A673 (cell line): ENCODE measurements at regions of chr2 and their contacts with region 1.

Region 1: DNA sequence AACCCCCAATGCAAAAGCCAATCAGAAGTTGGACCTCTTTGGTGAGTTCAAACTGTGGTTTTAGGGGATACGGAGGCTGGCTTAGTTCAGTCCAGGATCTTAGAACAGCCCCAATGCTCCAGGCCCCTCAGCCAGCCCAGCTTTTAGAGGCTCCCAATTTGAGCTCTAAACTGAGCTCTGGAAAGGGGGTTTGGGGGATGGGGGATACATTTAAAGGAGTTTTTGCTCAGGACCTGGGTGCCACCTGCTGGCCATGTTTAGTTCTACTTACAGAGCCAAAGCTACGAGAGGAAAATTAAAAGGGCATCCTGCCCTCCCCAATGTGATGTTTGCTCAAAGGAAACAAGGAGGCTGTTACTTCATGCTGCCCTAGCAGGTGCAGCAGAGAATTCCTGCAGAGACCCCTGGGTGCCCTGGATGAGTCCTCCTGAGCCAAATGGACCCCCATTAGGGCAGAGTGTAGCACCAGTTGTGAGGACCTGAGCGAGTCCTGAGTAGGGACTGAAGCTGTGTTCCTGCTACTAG is 15.9 kb upstream of the TMEM214 start:
- DNase-seq: peak; percentile 92
- H3K4me3 ChIP-seq: no peak overlapping the region
- H3K27ac ChIP-seq: peak overlapping the region; percentile 74
- H3K4me1 ChIP-seq: peaks cover 21% of the 10 kb centered on the region
- H3K27me3 ChIP-seq: no peaks in the 10 kb centered on the region
- CTCF ChIP-seq: peak; percentile 82

Region 2: GRCh38 chr2:26605195-26605998 is 411.5 kb before region 1 on chr2:
- CTCF ChIA-PET with region 1: no interaction called
- POLR2A ChIA-PET with region 1: no interaction called
- intact Hi-C with region 1: loop called (anchors 5 kb)
- DNase-seq: peak; percentile 62
- H3K4me3 ChIP-seq: no peak overlapping the region
- H3K27ac ChIP-seq: no peak overlapping the region
- H3K4me1 ChIP-seq: no peaks in the 10 kb centered on the region
- H3K27me3 ChIP-seq: no peaks in the 10 kb centered on the region
- CTCF ChIP-seq: peak; percentile 92

Region 3: GRCh38 chr2:26911911-26912861 is 104.7 kb before region 1 on chr2:
- CTCF ChIA-PET with region 1: interaction called, 17 read pairs
- POLR2A ChIA-PET with region 1: no interaction called
- intact Hi-C with region 1: no loop called
- DNase-seq: peak; percentile 95
- H3K4me3 ChIP-seq: no peak overlapping the region
- H3K27ac ChIP-seq: peak overlapping the region; percentile 66
- H3K4me1 ChIP-seq: peaks cover 38% of the 10 kb centered on the region
- H3K27me3 ChIP-seq: no peaks in the 10 kb centered on the region
- CTCF ChIP-seq: no peak

Region 4: DNA sequence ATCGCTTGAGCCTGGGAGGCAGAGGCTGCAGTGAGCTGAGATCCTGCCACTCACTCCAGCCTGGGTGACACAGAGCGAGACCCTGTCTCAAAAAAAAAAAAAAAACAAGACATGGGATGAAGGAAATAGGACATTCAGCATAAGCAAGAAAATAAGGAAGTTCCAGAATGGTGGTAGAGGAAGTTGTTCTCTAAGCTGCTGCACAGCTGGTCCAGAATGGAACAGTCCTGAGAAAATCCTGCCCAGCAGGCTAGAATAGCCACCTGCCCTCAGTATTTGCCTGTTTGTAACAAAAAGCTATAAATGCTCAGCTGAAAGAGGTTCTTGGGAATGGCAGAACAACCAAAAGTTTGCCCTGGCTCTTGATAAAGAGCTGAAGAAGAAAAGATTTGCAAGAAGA is 57.5 kb before region 1 on chr2:
- CTCF ChIA-PET with region 1: interaction called, 71 read pairs
- POLR2A ChIA-PET with region 1: interaction called, 6 read pairs
- intact Hi-C with region 1: loop called (anchors 1 kb)
- DNase-seq: no peak
- H3K4me3 ChIP-seq: no peak overlapping the region
- H3K27ac ChIP-seq: no peak overlapping the region
- H3K4me1 ChIP-seq: peaks cover 4% of the 10 kb centered on the region
- H3K27me3 ChIP-seq: no peaks in the 10 kb centered on the region
- CTCF ChIP-seq: no peak

Region 5: GRCh38 chr2:27281855-27282559 is 265.1 kb after region 1 on chr2 and contains the start of gene TRIM54:
- CTCF ChIA-PET with region 1: interaction called, 11 read pairs
- POLR2A ChIA-PET with region 1: no interaction called
- intact Hi-C with region 1: no loop called
- DNase-seq: peak; percentile 43
- H3K4me3 ChIP-seq: no peak within 1 kb of the TSS
- H3K27ac ChIP-seq: no peak within 1 kb of the TSS
- H3K4me1 ChIP-seq: peaks cover 16% of the 10 kb centered on the region
- H3K27me3 ChIP-seq: no peaks in the 10 kb centered on the region
- CTCF ChIP-seq: no peak
- total RNA-seq, gene TRIM54: 2.2 and 2.8 TPM in 2 replicates